Activated naive CD4-positive, alpha-beta T cell treated with anti-CD3 and anti-CD28 coated beads for 36 hours (primary cell): ENCODE measurements at regions of chr19 and their contacts with region 1.

Region 1: DNA sequence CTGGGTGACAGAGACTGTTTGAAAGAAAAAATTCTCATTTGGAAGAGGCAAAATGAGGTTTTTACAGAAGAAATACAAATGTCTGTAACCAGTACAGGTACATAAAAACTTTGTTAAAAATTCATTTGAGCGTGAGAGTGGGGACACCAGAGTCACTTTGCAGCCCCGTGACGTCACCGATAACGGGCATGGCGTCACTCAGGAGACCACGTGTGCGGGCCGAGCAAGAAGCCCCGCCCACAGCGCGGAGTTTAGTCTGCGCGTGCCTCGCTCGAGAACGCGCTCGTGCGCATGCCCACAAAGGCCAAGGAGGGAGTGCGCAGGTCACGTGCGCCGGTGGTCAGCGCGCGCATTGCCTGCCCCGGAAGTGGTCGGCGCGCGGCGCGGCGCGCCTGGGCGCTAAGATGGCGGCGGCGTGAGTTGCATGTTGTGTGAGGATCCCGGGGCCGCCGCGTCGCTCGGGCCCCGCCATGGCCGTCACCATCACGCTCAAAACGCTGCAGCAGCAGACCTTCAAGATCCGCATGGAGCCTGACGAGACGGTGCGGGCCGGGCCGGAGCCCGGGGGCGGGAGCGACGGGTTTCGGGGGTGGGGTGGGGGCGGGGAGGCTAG is at the start of gene RAD23A:
- DNase-seq: peak; percentile 98
- H3K4me3 Mint-ChIP-seq: peak within 1 kb of the TSS; percentile 90
- H3K27ac Mint-ChIP-seq: peak within 1 kb of the TSS; percentile 97
- H3K4me1 Mint-ChIP-seq: peaks cover 57% of the 10 kb centered on the region
- H3K27me3 Mint-ChIP-seq: no peaks in the 10 kb centered on the region
- total RNA-seq, gene RAD23A: 219 to 223 TPM

Region 2: DNA sequence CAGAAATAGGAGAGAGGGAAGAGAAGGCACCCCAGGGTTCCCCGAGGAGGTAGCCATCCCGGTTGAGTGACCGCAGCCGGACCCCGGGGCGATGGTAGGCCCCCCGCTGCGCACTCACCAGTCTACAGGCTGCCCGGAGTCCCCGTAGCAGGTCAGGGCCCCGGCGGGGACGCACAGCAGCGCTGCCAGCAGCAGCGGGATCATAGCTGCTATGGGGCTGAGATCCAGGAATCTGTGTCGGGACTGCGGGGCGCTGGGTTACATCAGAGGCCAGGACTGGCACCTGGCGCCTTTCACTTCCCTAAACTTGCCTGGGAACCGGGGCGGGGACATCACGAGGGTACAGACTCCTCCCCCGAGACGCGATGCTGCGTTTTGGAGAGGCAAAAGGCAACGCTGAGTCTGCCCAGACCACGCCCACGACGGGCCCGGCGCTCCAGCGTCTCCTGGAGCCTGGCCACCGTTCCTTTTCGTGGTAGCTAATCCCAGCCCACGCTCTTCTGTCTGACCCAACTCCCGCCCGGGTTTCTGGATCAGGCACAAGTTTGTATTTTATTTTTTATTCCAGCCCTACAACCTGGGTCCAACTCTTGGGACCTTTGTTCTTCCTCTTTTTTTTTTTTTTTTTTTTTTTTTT is 64.3 kb before region 1 on chr19 and contains the start of gene DNASE2:
- CTCF ChIA-PET with region 1: no interaction called
- intact Hi-C with region 1: loop called (anchors 1 kb)
- DNase-seq: peak; percentile 97
- H3K4me3 Mint-ChIP-seq: peak within 1 kb of the TSS; percentile 88
- H3K27ac Mint-ChIP-seq: peak within 1 kb of the TSS; percentile 76
- H3K4me1 Mint-ChIP-seq: peaks cover 28% of the 10 kb centered on the region
- H3K27me3 Mint-ChIP-seq: no peaks in the 10 kb centered on the region
- total RNA-seq, gene DNASE2: 30.9 to 31.6 TPM

Region 3: DNA sequence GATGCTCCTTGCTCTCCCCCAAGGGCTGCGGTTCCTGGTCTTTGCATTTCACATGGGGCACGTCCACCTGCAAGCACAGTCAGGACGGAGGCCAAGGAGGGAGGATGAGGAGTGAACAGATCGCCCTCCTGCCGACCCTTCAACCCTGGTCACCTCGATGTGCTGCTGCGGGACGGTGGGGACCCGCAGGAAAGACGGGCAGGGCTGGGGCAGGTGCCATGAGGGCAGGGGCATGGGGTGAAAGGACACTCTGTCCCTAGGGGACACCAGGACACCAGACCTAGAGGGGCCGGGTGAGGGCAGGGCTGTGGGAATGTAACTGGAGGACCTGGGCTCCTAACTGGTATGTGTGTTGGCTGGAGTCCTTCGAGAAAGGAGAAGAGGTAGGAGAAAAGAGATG is 27.3 kb before region 1 on chr19:
- CTCF ChIA-PET with region 1: no interaction called
- intact Hi-C with region 1: no loop called
- DNase-seq: no peak
- H3K4me3 Mint-ChIP-seq: peak overlapping the region; percentile 62
- H3K27ac Mint-ChIP-seq: peak overlapping the region; percentile 76
- H3K4me1 Mint-ChIP-seq: peaks cover 34% of the 10 kb centered on the region
- H3K27me3 Mint-ChIP-seq: no peaks in the 10 kb centered on the region

Region 4: GRCh38 chr19:12956446-12957388 is 11.1 kb after region 1 on chr19 and contains the start of gene GADD45GIP1:
- CTCF ChIA-PET with region 1: no interaction called
- intact Hi-C with region 1: loop called (anchors 1 kb)
- DNase-seq: peak; percentile 85
- H3K4me3 Mint-ChIP-seq: peak within 1 kb of the TSS; percentile 88
- H3K27ac Mint-ChIP-seq: peak within 1 kb of the TSS; percentile 96
- H3K4me1 Mint-ChIP-seq: peaks cover 43% of the 10 kb centered on the region
- H3K27me3 Mint-ChIP-seq: no peaks in the 10 kb centered on the region
- total RNA-seq, gene GADD45GIP1: 27.4 to 28.6 TPM